Sciatic nerve (tissue), 2 donors: ENCODE measurements at regions of chr10 and their contacts with region 1.

Region 1: GRCh38 chr10:130885021-130885655 is 426.4 kb downstream of the TCERG1L start:
- DNase-seq: no peak
- ATAC-seq: peak; percentile 89

Region 2: DNA sequence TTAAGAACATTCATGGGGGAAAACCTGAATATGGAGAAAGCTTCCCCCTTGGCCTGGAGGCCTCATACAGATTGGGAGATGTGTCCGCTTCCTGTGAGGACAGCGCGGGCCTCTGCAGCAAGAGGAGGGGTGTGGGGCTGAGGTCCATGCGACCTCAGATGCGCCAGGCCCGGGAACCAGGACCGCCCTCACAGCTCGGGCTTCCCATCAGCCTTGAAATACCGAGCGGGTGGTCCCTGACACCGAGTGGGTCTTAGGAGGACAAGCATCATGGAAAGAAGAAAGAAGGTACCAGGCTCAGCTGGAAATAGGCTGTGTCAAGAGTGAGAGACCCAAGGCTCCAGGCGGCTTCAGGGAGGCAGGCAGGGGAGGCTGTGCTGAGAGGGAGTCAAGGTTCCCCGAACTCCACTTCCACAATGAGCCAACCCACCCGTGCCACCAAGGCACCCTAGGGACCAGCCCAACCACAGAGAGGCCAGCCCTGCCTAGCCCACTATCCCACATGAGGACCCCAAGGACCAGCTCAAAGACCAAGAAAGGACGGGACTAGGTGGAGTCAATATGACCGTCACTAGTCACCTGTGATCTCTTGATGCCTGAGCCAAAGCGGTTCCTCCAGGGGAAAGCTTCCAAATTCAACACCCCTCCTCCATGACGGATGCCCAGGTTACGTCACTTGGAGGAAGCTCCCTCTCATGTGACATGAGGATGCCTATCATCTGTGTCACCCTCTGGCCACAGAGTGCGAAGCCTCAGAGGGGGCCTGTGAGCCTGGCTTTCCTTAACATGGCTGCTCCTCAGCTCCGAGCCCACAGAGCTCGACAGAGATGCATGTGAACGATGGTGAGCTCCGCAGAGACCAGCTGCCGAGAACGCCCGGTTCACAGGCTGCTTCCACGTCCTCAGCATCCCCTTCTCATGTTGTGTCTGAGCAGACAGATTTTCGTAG is 322.7 kb after region 1 on chr10:
- intact Hi-C with region 1: loop called (anchors 10 kb)
- DNase-seq: peak; percentile 32
- ATAC-seq: no peak

Region 3: DNA sequence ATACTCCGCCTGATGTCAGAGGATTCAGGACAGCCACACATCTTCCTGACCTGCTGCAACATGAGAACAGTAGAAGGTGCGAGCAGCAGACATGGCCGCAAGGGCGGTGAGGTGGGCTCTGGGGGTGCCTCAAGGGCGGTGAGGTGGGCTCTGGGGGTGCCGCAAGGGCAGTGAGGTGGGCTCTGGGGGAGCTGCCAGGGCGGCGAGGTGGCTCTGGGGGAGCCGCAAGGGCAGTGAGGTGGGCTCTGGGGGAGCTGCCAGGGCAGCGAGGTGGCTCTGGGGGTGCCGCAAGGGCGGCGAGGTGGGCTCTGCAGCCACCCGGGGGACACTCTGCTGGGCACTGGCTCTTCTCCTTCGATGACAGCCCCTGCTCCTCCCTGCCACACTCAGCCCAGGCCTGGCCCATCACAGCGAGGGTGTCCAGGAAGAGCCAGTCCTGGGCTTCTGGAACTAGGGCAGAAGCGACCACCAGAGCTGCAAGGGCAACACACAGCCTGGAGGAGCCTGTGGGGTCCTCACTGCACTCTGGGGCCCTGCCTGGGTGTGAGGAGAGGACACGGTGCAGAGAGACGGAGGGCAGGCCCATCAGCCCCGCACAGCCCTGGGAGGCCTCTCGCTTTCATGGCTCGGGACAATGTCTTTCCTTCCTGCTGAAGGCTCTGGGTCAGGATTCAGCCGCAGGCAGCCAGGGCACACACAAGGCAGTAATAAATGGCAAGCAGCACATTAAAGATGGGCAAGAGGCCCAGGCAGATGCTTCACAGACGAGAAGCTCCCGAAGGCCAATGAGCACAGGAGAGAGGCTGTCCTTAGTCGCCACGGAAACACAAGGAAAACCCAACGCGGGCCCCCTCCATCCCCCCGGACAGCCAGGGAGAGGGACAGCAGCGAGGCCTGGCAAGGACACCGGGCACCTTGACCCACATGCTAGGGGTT is 1380.1 kb after region 1 on chr10:
- intact Hi-C with region 1: loop called (anchors 5 kb)
- DNase-seq: no peak
- ATAC-seq: no peak